ENCODE measurements at regions of chr11 and their contacts with region 1.

Region 1: DNA sequence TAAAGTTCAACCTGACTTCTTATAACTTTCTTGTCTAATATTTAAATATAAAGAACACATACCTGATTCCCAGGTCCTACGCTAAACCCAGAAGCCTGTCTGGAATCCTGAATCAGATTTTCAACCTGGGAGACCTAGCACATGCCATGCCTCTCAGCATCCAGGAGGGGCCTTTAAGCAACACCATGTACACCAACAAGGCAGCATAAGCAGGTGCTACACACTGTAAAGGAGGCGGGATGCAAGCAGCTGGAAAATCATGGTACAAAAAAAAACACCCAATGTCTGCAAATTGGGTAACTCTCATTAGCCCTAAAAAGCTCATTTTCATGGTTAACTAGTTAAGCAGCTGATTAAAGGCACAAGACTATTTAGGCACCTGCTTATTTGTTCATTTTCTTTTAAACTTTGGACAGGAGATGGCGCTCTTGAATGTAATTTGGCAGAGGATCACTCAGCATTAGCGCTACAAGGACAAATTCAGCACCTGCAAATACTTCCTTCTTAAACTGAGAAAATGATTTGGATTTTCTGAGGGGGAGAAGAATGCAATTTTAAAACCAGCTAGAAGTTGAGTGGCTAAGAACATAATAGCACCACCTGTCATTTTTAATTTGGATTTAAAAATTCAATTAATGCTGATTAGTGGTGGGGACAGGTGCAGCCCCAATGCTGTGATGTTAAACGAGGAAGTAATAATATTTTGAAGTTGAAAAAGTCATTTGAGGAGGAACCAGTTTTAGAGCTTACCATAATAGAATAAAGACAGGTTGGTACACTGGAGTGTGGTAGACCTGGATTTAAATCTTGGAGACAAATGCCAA is 104.0 kb downstream of the FAR1 start:
- DNase-seq: peak; percentile 76
- ATAC-seq: peak; percentile 67
- H3K4me3 ChIP-seq: no peak overlapping the region
- H3K27ac ChIP-seq: no peak overlapping the region
- H3K4me1 ChIP-seq: no peaks in the 10 kb centered on the region
- H3K27me3 ChIP-seq: no peaks in the 10 kb centered on the region
- CTCF ChIP-seq: peak; percentile 80

Region 2: GRCh38 chr11:13955971-13956421 is 183.6 kb after region 1 on chr11:
- CTCF ChIA-PET with region 1: interaction called, 4 read pairs
- POLR2A ChIA-PET with region 1: no interaction called
- intact Hi-C with region 1: loop called (anchors 2 kb)
- DNase-seq: peak; percentile 76
- ATAC-seq: peak; percentile 53; the same call in 1 of the 2 replicates
- H3K4me3 ChIP-seq: no peak overlapping the region
- H3K27ac ChIP-seq: no peak overlapping the region
- H3K4me1 ChIP-seq: peaks cover 5% of the 10 kb centered on the region; the same call in 1 of the 2 replicates
- H3K27me3 ChIP-seq: peaks cover 7% of the 10 kb centered on the region; the same call in 1 of the 2 replicates
- CTCF ChIP-seq: peak; percentile 89

Region 3: GRCh38 chr11:14041040-14041439 is 268.6 kb after region 1 on chr11:
- CTCF ChIA-PET with region 1: no interaction called
- POLR2A ChIA-PET with region 1: no interaction called
- intact Hi-C with region 1: loop called (anchors 2 kb)
- DNase-seq: peak; percentile 46
- ATAC-seq: peak; percentile 58; the same call in 1 of the 2 replicates
- H3K4me3 ChIP-seq: no peak overlapping the region
- H3K27ac ChIP-seq: no peak overlapping the region
- H3K4me1 ChIP-seq: peaks cover 9% of the 10 kb centered on the region; the same call in 1 of the 2 replicates
- H3K27me3 ChIP-seq: peaks cover 6% of the 10 kb centered on the region; the same call in 1 of the 2 replicates
- CTCF ChIP-seq: peak; percentile 70

Measured in PC-3 (cell line).